ENCODE measurements at regions of chr6 and their contacts with region 1.

Region 1: DNA sequence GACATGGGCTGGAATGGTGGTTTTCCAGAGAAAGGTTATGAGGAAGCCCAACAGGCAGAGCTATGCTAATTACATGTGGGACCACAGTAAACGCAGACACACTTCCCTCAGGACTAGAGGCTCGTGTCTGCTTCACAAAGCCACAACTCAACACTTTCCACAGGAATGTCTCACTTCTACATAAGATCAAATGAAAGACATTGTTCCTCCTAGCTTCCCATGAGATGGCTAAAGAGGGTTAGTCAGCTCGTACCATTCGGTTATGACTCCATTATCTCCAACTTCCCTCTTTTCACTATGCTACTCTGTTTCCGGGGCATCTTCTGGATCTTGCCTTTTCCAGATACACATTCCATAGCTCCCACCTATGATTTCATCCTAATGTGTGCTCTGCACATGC is 29.1 kb upstream of the ZC3H12D start:
- DNase-seq: no peak
- H3K4me3 ChIP-seq: no peak overlapping the region
- H3K27ac ChIP-seq: no peak overlapping the region
- H3K27me3 ChIP-seq: no peaks in the 10 kb centered on the region
- CTCF ChIP-seq: no peak

Region 2: DNA sequence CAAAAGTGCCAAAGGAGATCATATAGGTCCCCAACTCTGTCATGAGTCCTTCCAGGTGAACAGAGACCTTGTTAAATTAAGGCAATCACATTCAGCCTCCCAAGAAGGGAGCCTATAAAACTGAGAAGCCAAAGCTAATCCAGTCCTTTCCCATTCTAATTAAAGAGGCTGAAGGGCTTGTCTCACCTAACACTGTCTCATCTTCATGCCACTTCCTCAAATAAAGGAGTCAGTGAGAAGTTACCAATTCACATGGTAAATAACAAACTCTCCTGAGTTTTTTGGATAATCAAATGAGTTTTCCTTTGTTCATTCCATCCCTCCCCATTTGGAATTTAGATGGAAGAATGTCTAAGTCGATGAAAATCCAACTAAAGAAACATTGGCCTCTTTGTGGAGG is 524.3 kb before region 1 on chr6:
- CTCF ChIA-PET with region 1: interaction called, 10 read pairs
- POLR2A ChIA-PET with region 1: no interaction called
- DNase-seq: no peak
- H3K4me3 ChIP-seq: no peak overlapping the region
- H3K27ac ChIP-seq: no peak overlapping the region
- H3K27me3 ChIP-seq: no peaks in the 10 kb centered on the region
- CTCF ChIP-seq: no peak

Region 3: GRCh38 chr6:149431905-149432775 is 81.8 kb before region 1 on chr6:
- CTCF ChIA-PET with region 1: interaction called, 52 read pairs
- POLR2A ChIA-PET with region 1: no interaction called
- DNase-seq: peak; percentile 53
- H3K4me3 ChIP-seq: peak overlapping the region; percentile 7; the same call in 1 of the 2 replicates
- H3K27ac ChIP-seq: no peak overlapping the region
- H3K27me3 ChIP-seq: no peaks in the 10 kb centered on the region
- CTCF ChIP-seq: peak; percentile 96

Region 4: DNA sequence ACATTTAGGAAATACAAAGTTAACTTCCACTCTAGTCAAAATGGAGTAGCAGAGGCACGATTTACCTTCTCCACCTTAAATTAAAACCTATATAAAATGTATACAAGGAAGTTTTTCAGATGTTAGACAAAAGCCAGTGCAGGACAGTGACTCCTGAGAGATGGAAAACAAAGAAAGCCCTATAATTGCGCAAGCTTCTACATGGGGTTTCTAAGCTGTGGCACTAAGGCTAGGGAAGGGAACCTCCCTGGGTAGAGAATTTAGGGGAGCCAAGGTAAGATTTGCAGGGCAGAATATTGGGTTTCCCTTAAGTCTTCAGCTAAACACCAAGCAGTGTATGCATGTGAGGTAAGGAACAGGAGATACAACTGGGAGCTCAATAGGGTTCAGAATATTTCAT is 10.6 kb before region 1 on chr6:
- CTCF ChIA-PET with region 1: interaction called, 17 read pairs
- POLR2A ChIA-PET with region 1: no interaction called
- DNase-seq: no peak
- H3K4me3 ChIP-seq: no peak overlapping the region
- H3K27ac ChIP-seq: no peak overlapping the region
- H3K27me3 ChIP-seq: no peaks in the 10 kb centered on the region
- CTCF ChIP-seq: no peak

Region 5: DNA sequence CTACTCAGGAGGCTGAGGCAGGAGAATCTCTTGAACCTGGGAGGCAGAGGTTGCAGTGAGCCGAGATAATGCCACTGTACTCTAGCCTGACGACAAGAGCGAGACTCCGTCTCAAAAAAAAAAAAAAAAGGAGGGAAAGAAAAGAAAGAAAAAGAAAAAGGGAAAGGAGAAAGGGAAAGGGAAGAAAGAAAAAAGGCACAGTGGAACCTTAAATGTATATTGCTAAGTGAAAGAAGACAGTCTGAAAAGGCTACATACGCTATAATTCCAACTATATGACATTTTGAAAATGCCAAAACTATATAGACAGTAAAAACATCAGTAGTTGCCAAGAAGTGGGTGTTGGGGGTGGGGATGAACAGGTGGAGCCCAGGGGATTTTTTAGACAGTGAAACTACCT is 15.7 kb after region 1 on chr6:
- CTCF ChIA-PET with region 1: interaction called, 10 read pairs
- POLR2A ChIA-PET with region 1: no interaction called
- DNase-seq: no peak
- H3K4me3 ChIP-seq: no peak overlapping the region
- H3K27ac ChIP-seq: no peak overlapping the region
- H3K27me3 ChIP-seq: no peaks in the 10 kb centered on the region
- CTCF ChIP-seq: no peak

Measured in AG04450 (cell line).